PC-9 (cell line): ENCODE measurements at regions of chr7 and their contacts with region 1.

Region 1: DNA sequence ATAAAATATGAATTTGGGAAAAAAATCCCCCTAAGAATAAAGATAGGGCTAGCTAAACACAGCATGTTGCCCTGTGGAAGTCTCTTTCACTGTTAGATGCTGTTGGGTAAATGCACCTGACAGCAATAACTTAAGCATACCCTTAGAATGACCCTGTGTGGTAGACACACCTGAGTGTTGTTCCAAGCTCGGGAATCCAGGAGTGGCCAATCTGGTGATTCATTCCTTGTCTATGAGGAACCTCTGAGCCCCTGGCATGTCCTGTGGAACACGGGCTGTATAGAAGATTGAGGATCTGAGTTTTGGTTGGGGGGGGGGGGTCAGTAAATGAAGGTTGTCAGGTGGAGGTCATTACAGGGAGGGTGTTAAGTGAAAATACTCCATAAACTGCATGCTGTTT is 730.0 kb upstream of the IGFBP3 start:
- DNase-seq: peak; percentile 79 to 97
- H3K4me3 ChIP-seq: no peak overlapping the region
- H3K27ac ChIP-seq: peak overlapping the region; percentile 96
- H3K4me1 ChIP-seq: peaks cover 35% of the 10 kb centered on the region
- H3K27me3 ChIP-seq: no peaks in the 10 kb centered on the region
- CTCF ChIP-seq: no peak

Region 2: DNA sequence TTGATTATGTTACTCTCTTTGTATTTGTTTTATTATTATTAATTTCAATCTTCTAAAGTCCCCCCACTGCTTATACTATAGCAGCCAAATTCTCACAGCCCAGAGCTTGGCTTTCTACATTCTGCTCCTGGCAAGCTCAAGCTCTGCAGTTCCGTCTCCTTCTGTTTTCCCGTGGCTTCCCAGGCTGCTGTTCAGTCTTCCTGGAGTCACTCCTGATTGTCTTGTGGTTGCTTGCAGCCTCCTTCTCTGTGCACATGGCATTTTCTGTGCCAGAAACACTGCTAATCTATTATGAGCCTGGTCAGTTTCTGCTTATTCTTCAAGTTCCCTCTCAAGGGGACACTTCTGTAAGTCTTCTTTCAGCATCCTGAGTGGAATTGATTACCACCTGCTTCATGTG is 196.3 kb before region 1 on chr7:
- CTCF ChIA-PET with region 1: no interaction called
- POLR2A ChIA-PET with region 1: no interaction called
- intact Hi-C with region 1: loop called (anchors 1 kb)
- DNase-seq: no peak
- H3K4me3 ChIP-seq: no peak overlapping the region
- H3K27ac ChIP-seq: no peak overlapping the region
- H3K4me1 ChIP-seq: no peaks in the 10 kb centered on the region
- H3K27me3 ChIP-seq: no peaks in the 10 kb centered on the region
- CTCF ChIP-seq: no peak

Region 3: GRCh38 chr7:46486256-46487206 is 164.5 kb before region 1 on chr7:
- CTCF ChIA-PET with region 1: no interaction called
- POLR2A ChIA-PET with region 1: no interaction called
- intact Hi-C with region 1: loop called (anchors 1 kb)
- DNase-seq: no peak
- H3K4me3 ChIP-seq: no peak overlapping the region
- H3K27ac ChIP-seq: peak overlapping the region; percentile 18
- H3K4me1 ChIP-seq: peaks cover 26% of the 10 kb centered on the region
- H3K27me3 ChIP-seq: no peaks in the 10 kb centered on the region
- CTCF ChIP-seq: no peak

Region 4: GRCh38 chr7:46764100-46764936 is 113.2 kb after region 1 on chr7:
- CTCF ChIA-PET with region 1: no interaction called
- POLR2A ChIA-PET with region 1: no interaction called
- intact Hi-C with region 1: loop called (anchors 2 kb)
- DNase-seq: peak; percentile 82 to 95
- H3K4me3 ChIP-seq: no peak overlapping the region
- H3K27ac ChIP-seq: peak overlapping the region; percentile 69
- H3K4me1 ChIP-seq: peaks cover 32% of the 10 kb centered on the region
- H3K27me3 ChIP-seq: no peaks in the 10 kb centered on the region
- CTCF ChIP-seq: no peak

Region 5: GRCh38 chr7:46786221-46786954 is 135.3 kb after region 1 on chr7:
- CTCF ChIA-PET with region 1: no interaction called
- POLR2A ChIA-PET with region 1: interaction called, 3 read pairs
- intact Hi-C with region 1: loop called (anchors 2 kb)
- DNase-seq: peak; percentile 40 to 95
- H3K4me3 ChIP-seq: no peak overlapping the region
- H3K27ac ChIP-seq: peak overlapping the region; percentile 60
- H3K4me1 ChIP-seq: peaks cover 35% of the 10 kb centered on the region
- H3K27me3 ChIP-seq: no peaks in the 10 kb centered on the region
- CTCF ChIP-seq: no peak

Region 6: GRCh38 chr7:46881507-46882127 is 230.5 kb after region 1 on chr7:
- CTCF ChIA-PET with region 1: no interaction called
- POLR2A ChIA-PET with region 1: no interaction called
- intact Hi-C with region 1: loop called (anchors 2 kb)
- DNase-seq: peak; percentile 44 to 60
- H3K4me3 ChIP-seq: no peak overlapping the region
- H3K27ac ChIP-seq: no peak overlapping the region
- H3K4me1 ChIP-seq: 0 out of 2 replicates have a peak, but pooled peaks cover 3% of the 10 kb centered on the region
- H3K27me3 ChIP-seq: no peaks in the 10 kb centered on the region
- CTCF ChIP-seq: no peak